HEK293 (cell line): ENCODE measurements at regions of chr19 and their contacts with region 1.

Region 1: GRCh38 chr19:48705431-48705830 is 9.7 kb downstream of the FUT2 start:
- H3K4me3 ChIP-seq: no peak overlapping the region
- H3K27ac ChIP-seq: no peak overlapping the region
- H3K4me1 ChIP-seq: no peaks in the 10 kb centered on the region
- CTCF ChIP-seq: no peak

Region 2: GRCh38 chr19:48085904-48086864 is 619.2 kb before region 1 on chr19:
- CTCF ChIA-PET with region 1: no interaction called
- POLR2A ChIA-PET with region 1: interaction called, 10 read pairs
- H3K4me3 ChIP-seq: no peak overlapping the region
- H3K27ac ChIP-seq: no peak overlapping the region
- H3K4me1 ChIP-seq: no peaks in the 10 kb centered on the region
- CTCF ChIP-seq: 0 out of 2 replicates have a peak, but pooled peaks have one; percentile 8

Region 3: GRCh38 chr19:48738557-48739399 is 33.3 kb after region 1 on chr19:
- CTCF ChIA-PET with region 1: no interaction called
- POLR2A ChIA-PET with region 1: no interaction called
- H3K4me3 ChIP-seq: peak overlapping the region; percentile 36
- H3K27ac ChIP-seq: peak overlapping the region; percentile 77; the same call in 1 of the 2 replicates
- H3K4me1 ChIP-seq: peaks cover 5% of the 10 kb centered on the region
- CTCF ChIP-seq: no peak